ENCODE measurements at regions of chr9 and their contacts with region 1.

Region 1: DNA sequence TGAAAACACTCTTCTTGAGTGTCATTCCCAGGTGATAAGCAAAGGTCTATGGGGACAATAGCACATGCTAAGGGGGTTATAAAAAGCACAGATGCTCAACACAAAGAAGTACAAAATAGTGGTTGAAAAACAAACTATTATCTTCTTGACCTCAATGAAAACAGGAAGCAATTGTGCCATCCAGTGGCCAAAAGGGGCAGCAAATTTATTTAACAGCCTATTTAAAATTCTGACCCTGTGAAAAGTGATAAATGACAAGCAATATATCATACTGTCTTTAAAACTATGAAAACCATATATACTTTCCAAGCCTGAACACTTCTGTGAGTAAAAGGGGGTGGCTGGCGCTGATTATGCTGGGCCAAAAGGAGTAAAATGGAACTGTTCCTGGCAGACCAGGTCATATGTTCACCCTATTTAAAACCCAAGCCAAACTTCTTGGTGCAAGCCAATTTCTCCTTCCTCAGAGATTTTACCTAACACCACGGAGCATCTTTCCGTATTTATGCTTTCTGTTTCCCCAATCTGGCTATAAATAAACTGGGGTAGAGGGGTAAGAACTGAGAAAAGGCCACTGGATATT is 29.7 kb downstream of the TEX10 start:
- DNase-seq: peak in 2 of 10 donors; percentile 17 to 35

Region 2: DNA sequence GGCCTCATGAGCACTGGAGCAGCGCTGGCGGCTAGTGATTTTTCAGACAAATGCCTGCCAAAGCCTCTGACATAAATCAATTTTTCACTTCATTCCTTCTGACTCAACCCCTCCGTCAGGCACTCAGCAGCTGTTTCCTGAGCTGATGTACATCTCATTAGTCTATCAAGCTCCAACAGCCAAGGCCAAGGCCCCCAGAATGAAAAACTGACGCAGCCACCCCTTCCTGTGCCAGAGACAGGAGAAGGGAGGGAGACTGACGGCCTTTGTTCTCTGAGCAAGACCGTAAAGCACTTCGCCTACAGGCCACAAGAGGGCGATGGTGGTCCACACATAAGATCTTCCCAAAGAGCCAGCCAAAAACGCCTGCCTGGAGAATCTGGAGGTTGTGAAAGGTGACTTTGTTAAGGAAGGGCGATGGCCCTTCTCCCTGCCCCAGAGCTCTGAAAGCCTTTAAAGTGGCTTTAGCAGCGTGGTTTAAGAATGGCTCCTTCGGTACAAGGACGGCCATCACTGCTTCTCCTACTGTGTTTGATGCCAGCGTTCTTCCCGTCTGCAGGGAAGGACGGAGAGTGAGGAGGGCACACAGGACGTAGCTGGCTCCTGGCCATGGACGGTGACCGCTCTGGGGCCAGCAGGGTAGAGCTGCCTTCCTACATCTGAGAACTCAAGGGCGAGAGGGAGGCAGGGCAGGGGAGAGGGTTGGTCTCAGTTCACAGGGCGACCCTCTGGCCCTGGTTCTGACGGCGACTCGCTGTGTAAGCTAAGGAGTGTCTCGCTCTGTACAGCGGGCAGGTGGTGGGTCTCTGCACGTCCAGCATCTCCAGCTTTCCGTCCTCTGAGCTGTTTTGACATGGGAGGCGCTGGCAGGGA is 1138.3 kb before region 1 on chr9:
- intact Hi-C with region 1: loop called (anchors 5 kb)
- DNase-seq: peak; percentile 74 to 98 (median 88)

Region 3: DNA sequence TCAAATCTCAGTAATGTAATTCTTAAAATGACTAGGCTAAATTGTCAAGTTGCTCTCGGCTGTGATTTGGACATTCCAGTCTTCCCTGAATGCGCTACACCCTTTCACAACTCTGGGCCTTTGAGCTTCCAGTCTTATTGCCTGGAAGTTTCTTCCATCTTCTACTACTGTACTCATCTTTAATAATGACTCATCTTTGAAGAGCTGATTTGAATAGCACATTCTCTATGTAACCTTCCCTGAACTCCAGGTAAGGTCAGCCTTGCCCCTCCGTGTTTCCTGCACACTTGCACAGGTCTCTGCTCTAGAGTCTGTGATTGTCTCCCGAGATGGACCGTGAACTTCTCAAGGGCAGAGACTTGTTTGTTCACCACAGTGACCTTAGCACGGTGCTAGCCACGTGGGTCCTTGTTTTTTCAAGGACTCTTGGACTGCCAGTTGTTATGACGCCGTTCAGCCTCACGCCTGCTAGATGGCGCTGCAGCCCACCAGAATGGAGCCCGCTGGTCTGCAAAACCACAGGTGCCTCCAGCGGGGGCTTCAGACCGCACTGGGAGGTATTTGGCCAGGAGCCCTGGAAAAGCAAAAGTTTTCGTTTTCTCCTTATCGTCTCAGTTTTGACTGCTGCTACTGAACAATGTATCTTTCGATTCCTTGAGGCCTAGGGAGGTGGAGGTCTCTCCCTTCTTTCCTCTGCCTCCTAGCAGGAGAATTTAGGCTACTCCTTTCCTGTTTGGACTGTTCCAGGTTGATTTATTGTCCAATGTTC is 1056.6 kb before region 1 on chr9:
- intact Hi-C with region 1: loop called (anchors 2 kb)
- DNase-seq: peak; percentile 58 to 97 (median 79)

Region 4: GRCh38 chr9:99807276-99807852 is 515.7 kb before region 1 on chr9:
- intact Hi-C with region 1: loop called (anchors 5 kb)
- DNase-seq: peak in 6 of 10 donors; percentile 23 to 87 (median 60)

Region 5: DNA sequence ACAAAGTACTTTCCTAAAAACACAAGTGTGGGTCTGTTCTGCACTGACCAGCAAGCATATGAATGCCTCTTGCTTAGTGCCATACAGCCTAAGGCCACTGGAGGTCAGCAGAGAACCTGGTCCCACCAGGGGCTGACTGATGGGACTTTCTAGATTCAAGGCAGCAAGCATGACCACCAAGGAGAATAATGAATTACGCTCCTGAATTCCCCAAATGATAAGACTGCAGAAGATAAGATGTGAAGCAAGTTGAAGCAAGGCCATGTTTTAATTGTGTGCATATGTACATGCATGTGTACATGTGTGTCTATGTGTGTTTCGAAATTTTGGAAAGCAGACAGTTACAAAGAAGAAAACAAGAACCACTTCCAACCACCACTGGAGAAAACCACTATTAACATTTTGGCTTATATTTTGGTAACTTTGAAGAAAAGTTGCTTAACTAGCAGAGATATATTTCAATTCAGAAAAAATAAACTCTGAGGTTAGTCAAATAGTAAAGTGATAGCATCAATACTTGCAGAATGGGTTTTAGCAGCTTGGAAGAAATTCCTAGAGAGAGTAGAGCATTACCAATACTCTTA is 294.8 kb before region 1 on chr9:
- intact Hi-C with region 1: loop called (anchors 5 kb)
- DNase-seq: peak in 7 of 10 donors; percentile 59 to 94 (median 74)